ENCODE measurements at regions of chr10 and their contacts with region 1.

Region 1: GRCh38 chr10:73848821-73849489 is 25.4 kb downstream of the CAMK2G start:
- DNase-seq: no peak
- H3K4me3 ChIP-seq: no peak overlapping the region
- H3K27me3 ChIP-seq: no peaks in the 10 kb centered on the region
- CTCF ChIP-seq: peak; percentile 99

Region 2: DNA sequence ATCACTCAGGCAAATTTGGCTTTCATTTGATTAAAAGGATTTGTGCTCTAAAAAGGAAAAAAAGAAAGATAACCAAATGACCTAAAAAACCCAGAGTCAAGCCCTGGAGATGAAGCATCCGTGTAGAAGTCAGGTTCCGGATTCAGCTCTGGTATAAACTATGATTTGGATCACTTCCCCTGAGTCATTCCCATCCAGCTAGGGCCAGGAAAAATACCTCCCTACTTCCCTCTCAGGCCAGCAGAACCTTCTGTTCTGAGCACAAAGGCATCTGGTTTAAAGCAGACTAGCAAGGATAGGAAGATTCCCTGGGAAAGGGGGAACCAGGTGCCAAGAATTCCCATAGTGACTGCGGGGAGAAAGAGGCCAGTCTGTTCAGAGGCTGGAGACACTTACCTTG is 11.9 kb before region 1 on chr10:
- CTCF ChIA-PET with region 1: interaction called, 20 read pairs
- POLR2A ChIA-PET with region 1: no interaction called
- DNase-seq: no peak
- H3K4me3 ChIP-seq: no peak overlapping the region
- H3K27me3 ChIP-seq: no peaks in the 10 kb centered on the region
- CTCF ChIP-seq: no peak

Region 3: DNA sequence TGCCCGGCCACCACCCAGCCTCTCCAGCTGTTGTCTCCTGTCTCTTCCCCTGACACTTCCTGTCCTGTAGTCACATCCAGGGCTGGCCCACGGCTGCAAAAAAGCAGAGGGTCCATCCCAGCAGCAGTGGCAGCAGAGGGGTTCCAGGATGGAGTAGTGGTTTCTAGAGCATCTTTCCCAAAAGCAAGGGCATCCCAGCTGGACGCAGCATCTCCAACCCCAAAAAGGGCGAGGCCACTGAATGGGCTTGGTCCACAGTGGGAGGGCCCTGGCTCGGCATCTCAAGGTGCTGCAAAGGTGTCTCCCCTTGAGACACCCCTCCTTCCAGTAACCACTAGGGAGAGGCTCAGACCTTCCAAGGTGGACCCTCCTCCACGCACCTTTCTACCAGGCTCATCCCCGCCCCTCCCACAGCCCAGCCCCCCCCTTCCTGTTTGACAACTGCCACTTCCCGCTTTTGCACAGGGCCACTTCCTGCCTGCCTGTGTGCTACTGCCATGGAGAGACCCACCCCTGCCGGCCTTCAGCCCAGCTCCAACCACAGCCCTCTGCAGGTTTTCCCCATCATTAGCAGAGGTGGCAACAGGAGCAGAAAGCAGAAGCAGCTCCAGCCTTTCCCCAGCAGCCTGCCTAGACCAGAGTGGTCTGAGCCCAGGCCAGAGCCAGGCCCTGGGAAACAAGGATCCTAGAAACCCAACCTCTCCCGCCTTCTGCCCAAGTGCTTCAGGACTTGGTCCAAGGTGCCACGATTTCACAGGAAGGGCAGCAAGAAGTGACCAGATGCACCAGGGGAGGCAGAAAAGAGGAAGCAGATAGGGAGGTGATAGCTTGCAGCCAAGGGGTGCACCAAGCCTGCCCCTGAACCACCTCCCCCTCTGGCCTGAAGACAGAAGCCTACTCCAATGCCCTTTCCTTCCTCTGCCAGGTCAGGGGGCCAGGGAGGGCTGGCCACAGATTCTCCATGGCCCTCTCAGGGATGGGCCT is 16.8 kb after region 1 on chr10:
- CTCF ChIA-PET with region 1: interaction called, 17 read pairs
- POLR2A ChIA-PET with region 1: interaction called, 3 read pairs
- DNase-seq: no peak
- H3K4me3 ChIP-seq: no peak overlapping the region
- H3K27me3 ChIP-seq: no peaks in the 10 kb centered on the region
- CTCF ChIP-seq: no peak

Region 4: DNA sequence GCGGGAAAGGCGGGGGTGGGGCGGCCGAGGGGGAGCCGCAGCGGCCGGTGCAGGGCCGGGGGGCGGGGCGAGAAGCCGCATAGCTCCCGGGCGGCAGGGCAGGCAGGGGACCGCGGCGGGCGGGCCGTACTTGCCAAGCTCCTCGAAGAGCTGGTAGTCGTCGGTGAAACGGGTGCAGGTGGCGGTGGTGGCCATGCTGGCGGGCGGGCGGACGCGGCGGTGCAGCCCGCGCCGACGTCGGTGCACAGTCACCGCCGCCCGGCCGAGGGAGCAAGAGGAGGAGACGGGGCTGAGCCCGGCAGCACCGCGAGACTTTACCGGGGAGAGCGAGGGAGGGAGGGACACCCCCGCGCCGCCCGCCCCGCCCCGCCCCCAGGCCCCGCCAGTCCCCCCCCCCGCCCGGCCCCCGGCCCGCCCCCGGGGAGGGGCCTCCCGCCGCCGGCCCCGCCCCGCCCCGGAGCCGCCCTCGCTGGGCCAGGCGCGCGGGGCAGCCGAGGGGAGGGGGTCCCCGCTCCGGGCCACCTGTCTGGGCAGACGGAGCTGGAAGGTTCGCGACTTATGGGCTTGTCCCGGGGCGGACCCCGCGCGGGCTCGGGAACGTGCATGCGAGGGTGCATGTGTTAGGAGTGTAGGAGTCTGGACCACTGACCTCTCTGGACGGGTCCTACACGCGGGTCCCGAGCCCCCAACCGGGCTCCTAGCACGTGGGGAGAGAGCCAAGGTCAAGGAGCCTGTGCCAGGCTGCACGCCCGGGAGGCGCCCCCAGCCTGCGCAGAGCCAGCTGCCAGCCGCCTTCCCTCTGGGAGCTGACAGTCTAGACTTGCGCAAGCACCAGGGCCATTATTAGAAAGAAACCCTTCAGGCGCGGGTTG is 25.5 kb after region 1 on chr10 and contains the start of gene CAMK2G:
- CTCF ChIA-PET with region 1: interaction called, 337 read pairs
- POLR2A ChIA-PET with region 1: no interaction called
- DNase-seq: no peak
- H3K4me3 ChIP-seq: peak within 1 kb of the TSS; percentile 89
- H3K27me3 ChIP-seq: no peaks in the 10 kb centered on the region
- CTCF ChIP-seq: no peak
- polyA plus RNA-seq, gene CAMK2G: 32.5 and 43.8 TPM in 2 replicates

Region 5: GRCh38 chr10:73920089-73920488 is 71.1 kb after region 1 on chr10:
- CTCF ChIA-PET with region 1: no interaction called
- POLR2A ChIA-PET with region 1: no interaction called
- DNase-seq: no peak
- H3K4me3 ChIP-seq: no peak overlapping the region
- H3K27me3 ChIP-seq: no peaks in the 10 kb centered on the region
- CTCF ChIP-seq: peak; percentile 13; the same call in 1 of the 2 replicates

Measured in BJ (cell line).